ENCODE measurements at regions of chr1 and their contacts with region 1.

Region 1: GRCh38 chr1:53576381-53576801 is 117.2 kb downstream of the DMRTB1 start:
- DNase-seq: no peak
- H3K4me3 ChIP-seq: no peak overlapping the region
- H3K27ac ChIP-seq: no peak overlapping the region
- H3K4me1 ChIP-seq: peaks cover 19% of the 10 kb centered on the region
- H3K27me3 ChIP-seq: no peaks in the 10 kb centered on the region
- CTCF ChIP-seq: no peak

Region 2: DNA sequence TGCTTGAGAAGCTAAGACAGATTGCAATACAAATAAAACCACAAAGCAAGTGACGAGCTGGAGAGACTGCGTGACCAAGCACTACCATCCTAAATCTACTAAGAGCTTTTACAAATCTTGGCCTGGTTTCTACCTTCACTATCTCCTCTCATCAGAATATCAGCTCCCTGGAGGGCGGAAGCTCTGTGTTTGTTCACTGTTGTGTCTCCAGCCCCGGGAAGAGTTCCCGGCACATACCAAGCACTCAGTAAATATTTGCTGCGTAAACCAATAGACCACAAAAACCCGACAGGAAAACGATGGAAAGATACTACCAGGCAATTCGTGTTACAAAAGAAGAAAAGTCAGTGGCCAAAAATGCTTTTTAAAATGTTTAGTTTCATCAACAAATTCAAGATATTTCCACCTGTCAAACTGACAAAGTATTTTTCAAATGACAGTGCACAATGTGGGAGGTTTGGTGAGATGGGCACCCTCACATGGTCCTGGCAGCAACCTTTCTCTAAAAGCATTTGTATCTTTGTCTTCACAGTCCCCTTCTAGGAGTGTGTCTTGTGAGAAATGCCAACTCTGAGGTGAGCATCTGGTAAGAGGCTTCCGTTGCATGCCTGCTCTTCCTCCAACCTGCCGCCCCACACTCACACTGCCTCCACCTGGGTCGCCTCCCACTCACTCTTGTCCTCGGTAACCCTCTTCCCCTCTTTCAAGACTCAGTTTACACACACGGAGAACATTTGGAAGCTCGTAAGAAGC is 468.6 kb before region 1 on chr1:
- CTCF ChIA-PET with region 1: no interaction called
- POLR2A ChIA-PET with region 1: no interaction called
- intact Hi-C with region 1: no loop called
- DNase-seq: peak; percentile 54 to 91
- H3K4me3 ChIP-seq: no peak overlapping the region
- H3K27ac ChIP-seq: no peak overlapping the region
- H3K4me1 ChIP-seq: peaks cover 45% of the 10 kb centered on the region
- H3K27me3 ChIP-seq: no peaks in the 10 kb centered on the region
- CTCF ChIP-seq: no peak

Region 3: GRCh38 chr1:53431805-53432565 is 144.4 kb before region 1 on chr1:
- CTCF ChIA-PET with region 1: no interaction called
- POLR2A ChIA-PET with region 1: interaction called, 16 read pairs
- intact Hi-C with region 1: no loop called
- DNase-seq: no peak
- H3K4me3 ChIP-seq: no peak overlapping the region
- H3K27ac ChIP-seq: no peak overlapping the region
- H3K4me1 ChIP-seq: no peaks in the 10 kb centered on the region
- H3K27me3 ChIP-seq: peaks cover 7% of the 10 kb centered on the region; the same call in 1 of the 2 replicates
- CTCF ChIP-seq: no peak

Region 4: DNA sequence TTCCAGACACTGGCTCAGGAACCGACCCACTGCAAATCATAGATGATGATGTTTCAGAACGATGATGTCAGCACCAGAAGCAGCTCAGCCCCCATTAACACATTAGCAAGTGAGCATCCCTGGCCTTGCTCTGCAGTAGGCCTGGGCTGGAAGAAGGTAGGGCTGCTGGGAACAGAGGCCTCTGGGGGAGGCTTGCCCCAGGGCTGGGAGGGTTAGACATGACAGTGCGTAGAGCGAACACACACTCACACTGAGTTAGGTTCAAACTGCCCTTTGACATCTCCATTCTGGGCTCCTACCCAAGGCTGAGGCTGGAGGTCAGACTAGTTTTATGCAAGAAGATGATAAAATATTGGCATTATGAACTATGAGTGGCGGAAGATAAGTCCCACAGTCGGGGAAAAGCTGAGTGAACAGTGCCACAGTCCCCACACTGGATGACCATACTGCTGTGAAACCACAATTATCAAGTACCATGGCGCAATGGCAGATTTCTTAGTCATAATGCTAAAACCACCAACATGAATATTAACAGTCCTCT is 26.1 kb before region 1 on chr1:
- CTCF ChIA-PET with region 1: no interaction called
- POLR2A ChIA-PET with region 1: no interaction called
- intact Hi-C with region 1: no loop called
- DNase-seq: no peak
- H3K4me3 ChIP-seq: no peak overlapping the region
- H3K27ac ChIP-seq: no peak overlapping the region
- H3K4me1 ChIP-seq: no peaks in the 10 kb centered on the region; the same call in 1 of the 2 replicates
- H3K27me3 ChIP-seq: no peaks in the 10 kb centered on the region
- CTCF ChIP-seq: no peak